ENCODE measurements at regions of chr10 and their contacts with region 1.

Region 1: DNA sequence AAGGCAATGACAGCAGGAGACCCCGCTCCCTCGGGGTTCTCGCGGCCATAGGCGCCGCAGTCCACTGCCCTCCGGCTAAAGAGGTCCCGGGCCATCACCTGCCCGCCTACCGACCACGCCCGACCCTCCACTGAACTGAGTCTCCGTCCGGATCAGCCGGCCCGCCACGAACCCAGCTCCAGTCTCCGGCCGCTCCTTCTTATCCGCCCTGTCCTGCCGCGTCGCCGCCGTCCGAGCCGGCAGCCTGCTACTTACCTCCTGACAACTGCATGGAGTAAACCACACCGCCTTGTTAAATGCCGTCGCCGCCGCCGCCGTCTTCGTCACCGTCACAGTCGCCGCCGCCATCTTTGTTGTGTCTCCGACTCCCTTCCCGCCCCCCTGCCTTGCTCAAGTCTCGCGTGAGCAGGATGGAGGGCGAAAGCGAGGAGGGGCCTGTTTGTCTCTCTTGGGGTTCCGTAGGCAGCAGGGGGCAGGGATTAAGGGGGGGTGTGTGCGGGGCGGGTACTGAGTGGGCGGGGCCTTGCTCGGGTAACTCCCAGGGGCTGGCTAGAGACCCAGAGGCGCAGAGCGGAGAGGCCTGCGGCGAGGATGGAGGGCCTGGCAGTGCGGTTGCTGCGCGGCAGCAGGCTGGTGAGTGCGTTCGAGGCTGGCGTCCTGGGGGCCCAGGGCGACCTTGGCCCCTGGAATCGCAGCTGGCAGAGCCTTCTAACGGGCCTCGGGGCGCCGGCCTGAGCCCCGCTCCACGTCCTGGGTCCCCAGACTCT is at the starts of genes ACADSB and IKZF5:
- DNase-seq: peak; percentile 97
- H3K4me3 ChIP-seq: peak within 1 kb of the TSS; percentile 85 to 100 (median 94)
- H3K27ac ChIP-seq: peak within 1 kb of the TSS; percentile 91 to 96 (median 93)
- H3K4me1 ChIP-seq: peaks cover 0 to 34% (median 19%) of the 10 kb centered on the region in 4 donors
- H3K27me3 ChIP-seq: no peaks in the 10 kb centered on the region
- CTCF ChIP-seq: no peak
- EP300 ChIP-seq: no peak
- POLR2A ChIP-seq: peak; percentile 88
- total RNA-seq, gene ACADSB: 3.0 to 31.4 (median 13.9) TPM
- total RNA-seq, gene IKZF5: 6.2 to 11.1 (median 7.1) TPM

Region 2: DNA sequence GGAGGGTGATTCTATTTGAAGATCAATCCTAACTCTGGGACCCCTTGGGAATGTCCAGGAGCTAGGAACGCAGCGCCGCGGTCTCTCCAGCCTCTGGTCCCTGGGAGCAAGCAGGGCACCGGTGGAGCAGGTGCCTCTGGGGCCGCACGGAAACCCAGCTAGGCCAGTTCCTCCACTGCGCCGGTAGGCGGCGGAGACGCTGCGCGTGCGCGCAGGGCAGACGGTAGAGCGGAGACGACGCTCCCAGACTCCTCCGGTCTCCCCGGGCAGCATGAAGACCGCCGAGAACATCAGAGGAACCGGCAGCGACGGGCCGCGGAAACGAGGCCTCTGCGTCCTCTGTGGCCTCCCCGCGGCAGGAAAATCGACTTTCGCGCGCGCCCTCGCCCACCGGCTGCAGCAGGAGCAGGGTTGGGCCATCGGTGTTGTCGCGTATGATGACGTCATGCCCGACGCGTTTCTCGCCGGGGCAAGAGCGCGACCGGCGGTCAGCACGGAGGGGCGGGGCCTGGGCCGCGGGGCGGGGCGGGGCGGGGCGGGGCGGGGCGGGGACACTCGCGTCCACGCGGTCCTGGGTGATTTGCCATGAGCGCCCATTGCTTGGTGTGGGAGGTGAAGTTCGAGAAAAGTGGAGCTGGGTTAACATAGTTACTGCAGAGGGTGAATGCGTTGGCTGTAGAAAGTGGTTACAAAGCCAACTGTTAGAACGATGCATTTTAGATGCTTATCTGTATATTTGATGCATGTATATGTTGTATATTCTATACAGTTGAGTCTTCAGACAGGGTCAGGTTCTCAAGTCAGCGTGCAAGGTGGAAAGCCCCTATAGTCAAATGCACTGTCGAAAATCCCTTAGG is 28.2 kb before region 1 on chr10 and contains the start of gene PSTK:
- in situ Hi-C with region 1: no loop called
- intact Hi-C with region 1: loop called (anchors 1 kb)
- DNase-seq: peak; percentile 93
- H3K4me3 ChIP-seq: peak within 1 kb of the TSS; percentile 54 to 94 (median 76)
- H3K27ac ChIP-seq: peak within 1 kb of the TSS; percentile 86 to 96 (median 94)
- H3K4me1 ChIP-seq: peaks cover 5 to 14% (median 8%) of the 10 kb centered on the region in 4 donors
- H3K27me3 ChIP-seq: no peaks in the 10 kb centered on the region
- CTCF ChIP-seq: peak; percentile 96 to 100 (median 99)
- EP300 ChIP-seq: no peak
- POLR2A ChIP-seq: peak; percentile 78
- total RNA-seq, gene PSTK: 2.5 to 2.9 TPM in 2 of 4 donors, not detected in the others